HepG2 (cell line): ENCODE measurements at regions of chr12 and their contacts with region 1.

Region 1: GRCh38 chr12:50934981-50935807 is 17.1 kb upstream of the HIGD1C start:
- DNase-seq: peak; percentile 57
- ATAC-seq: peak; percentile 26
- H3K4me3 ChIP-seq: peak overlapping the region in 2 of 3 experiments; percentile 14 to 16; a peak in 1 of 6 replicates
- H3K27ac ChIP-seq: peak overlapping the region; percentile 93
- H3K4me1 ChIP-seq: peaks cover 66% of the 10 kb centered on the region
- H3K27me3 ChIP-seq: no peaks in the 10 kb centered on the region
- CTCF ChIP-seq: no peak
- EP300 ChIP-seq: peak in 1 of 2 experiments; percentile 41; a peak in 1 of 4 replicates
- POLR2A ChIP-seq: no peak
- RAD21 ChIP-seq: no peak

Region 2: GRCh38 chr12:48957141-48958048 is 1977.8 kb before region 1 on chr12 and contains the start of gene ARF3:
- CTCF ChIA-PET with region 1: no interaction called
- POLR2A ChIA-PET with region 1: no interaction called
- in situ Hi-C with region 1: no loop called
- intact Hi-C with region 1: loop called (anchors 5 kb)
- DNase-seq: peak; percentile 84
- ATAC-seq: peak; percentile 96
- H3K4me3 ChIP-seq: peak within 1 kb of the TSS; percentile 85 to 98 (median 96)
- H3K27ac ChIP-seq: peak within 1 kb of the TSS; percentile 66
- H3K4me1 ChIP-seq: peaks cover 32% of the 10 kb centered on the region
- H3K27me3 ChIP-seq: 0 out of 5 replicates have a peak, but pooled peaks cover 0 to 1% of the 10 kb centered on the region in 2 experiments
- CTCF ChIP-seq: peak; percentile 7; the same call in 1 of the 2 replicates
- EP300 ChIP-seq: no peak
- POLR2A ChIP-seq: peak; percentile 56 to 86
- RAD21 ChIP-seq: no peak
- total RNA-seq, gene ARF3: 48.4 and 53.8 TPM in 2 replicates

Region 3: DNA sequence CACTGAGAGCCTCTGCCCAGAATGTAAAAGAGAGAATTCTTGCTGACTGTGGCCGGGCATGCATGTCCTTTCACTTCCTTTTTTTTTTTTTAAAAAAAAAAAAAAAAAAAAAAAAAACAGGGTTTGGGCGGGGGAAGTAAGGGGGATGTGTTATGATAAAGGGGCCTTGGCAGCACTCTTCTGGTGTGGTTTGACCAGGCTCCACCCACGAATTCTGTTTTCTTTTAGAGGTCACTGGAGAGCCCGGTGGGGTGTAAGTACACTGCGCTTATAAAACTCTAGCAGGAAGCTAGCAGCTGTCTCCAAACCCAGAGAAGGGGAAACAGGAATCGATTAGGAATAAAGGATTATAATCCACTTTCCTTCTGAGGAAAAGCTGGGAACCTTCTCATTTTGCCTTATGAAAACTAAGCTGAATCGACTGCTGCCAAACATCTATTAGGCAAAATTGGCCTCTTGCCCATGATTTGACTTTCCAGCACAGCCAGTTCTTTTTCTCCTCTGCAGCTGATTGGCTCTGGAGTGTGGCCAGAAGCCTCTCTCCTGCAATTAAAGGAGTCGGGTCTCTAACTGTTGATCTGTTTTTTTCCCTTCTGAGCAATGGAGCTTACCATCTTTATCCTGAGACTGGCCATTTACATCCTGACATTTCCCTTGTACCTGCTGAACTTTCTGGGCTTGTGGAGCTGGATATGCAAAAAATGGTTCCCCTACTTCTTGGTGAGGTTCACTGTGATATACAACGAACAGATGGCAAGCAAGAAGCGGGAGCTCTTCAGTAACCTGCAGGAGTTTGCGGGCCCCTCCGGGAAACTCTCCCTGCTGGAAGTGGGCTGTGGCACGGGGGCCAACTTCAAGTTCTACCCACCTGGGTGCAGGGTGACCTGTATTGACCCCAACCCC is 10.5 kb before region 1 on chr12:
- CTCF ChIA-PET with region 1: no interaction called
- POLR2A ChIA-PET with region 1: interaction called, 46 read pairs
- in situ Hi-C with region 1: no loop called
- intact Hi-C with region 1: no loop called
- DNase-seq: peak; percentile 89
- ATAC-seq: peak; percentile 87
- H3K4me3 ChIP-seq: peak overlapping the region; percentile 70 to 85 (median 85)
- H3K27ac ChIP-seq: peak overlapping the region; percentile 82
- H3K4me1 ChIP-seq: peaks cover 48% of the 10 kb centered on the region
- H3K27me3 ChIP-seq: peaks cover 0 to 3% of the 10 kb centered on the region in 2 experiments; a peak in 1 of 5 replicates
- CTCF ChIP-seq: no peak
- EP300 ChIP-seq: 0 out of 4 replicates have a peak, but pooled peaks of 1 of the 2 experiments have one; percentile 8
- POLR2A ChIP-seq: peak; percentile 17 to 37; a peak in 2 of 4 replicates
- RAD21 ChIP-seq: no peak

Region 4: DNA sequence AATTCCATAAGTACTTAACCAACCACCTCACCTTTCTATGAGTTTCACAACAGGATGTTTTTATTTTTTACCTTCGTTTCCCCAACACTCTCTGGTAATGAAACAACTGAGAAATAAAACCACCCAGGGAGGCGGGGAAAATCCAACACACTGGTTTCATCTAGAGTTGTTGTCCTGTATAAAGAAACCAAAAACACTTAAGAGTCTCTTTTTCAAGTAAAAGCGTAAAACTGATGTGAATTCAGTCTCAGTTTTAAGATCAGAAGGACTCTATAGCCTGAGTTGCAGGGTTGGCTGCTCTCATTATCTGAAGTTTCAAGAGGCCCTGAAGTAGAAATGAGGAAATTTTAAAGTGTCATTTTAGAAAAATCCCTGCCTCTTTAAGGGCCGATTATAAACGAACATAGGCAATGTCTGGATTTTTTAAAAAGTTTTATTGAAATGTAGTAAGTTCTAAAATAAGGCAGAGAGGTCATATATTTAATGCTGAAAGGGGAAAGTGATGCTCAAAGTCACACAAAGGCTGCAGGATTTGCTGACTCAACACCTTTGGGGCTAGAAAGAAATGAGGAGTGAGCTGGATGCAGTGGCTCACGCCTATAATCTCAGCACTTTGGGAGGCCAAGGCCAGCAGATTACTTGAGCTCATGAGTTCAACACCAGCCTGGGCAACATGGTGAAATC is 44.3 kb after region 1 on chr12:
- CTCF ChIA-PET with region 1: no interaction called
- POLR2A ChIA-PET with region 1: interaction called, 25 read pairs
- in situ Hi-C with region 1: no loop called
- intact Hi-C with region 1: loop called (anchors 1 kb)
- DNase-seq: no peak
- ATAC-seq: no peak
- H3K4me3 ChIP-seq: no peak overlapping the region
- H3K27ac ChIP-seq: peak overlapping the region; percentile 68
- H3K4me1 ChIP-seq: peaks cover 34% of the 10 kb centered on the region
- H3K27me3 ChIP-seq: no peaks in the 10 kb centered on the region
- CTCF ChIP-seq: no peak
- EP300 ChIP-seq: no peak
- POLR2A ChIP-seq: no peak
- RAD21 ChIP-seq: no peak